ENCODE measurements at regions of chr5 and their contacts with region 1.

Region 1: DNA sequence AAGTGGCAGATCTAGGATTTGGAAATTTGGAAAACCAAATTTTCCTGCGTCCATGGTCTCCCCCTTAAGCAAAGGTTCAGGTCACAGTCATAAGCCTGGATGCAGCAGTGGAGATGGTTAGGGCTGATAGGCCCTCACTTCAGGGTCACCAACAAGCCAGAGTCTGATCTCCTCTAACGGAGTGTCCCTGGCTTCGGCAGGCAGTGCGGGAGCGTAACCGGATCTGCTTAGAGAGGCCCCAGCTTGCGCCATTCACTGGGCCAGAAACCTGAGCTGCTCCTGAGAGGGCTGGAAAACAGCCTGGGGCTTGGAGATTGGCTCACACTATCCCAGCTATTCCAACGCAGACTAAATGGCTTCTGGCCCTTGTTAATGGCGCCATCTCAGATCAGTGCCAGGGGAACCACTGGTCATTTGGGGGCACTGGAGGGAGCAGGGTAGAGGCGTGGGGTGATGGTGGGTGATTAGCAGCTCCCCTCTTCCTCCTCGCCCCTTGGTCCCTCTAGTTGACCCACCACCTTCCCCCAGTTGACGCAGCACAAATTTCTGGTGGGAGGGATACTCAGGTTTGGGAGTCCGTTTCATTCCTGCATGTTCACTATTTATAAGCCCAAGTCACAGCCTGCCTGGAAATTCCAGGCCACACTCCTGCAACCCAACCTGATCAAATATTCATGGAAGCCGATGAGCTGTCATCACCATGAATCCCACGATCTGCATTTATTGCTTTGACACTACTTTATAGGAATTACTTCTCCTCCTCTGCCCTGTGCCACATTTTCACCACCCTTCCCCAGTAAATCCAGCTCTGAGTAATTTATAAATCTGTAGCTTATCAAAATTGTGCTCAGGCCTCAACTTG is 134.6 kb upstream of the CPEB4 start:
- H3K4me3 ChIP-seq: no peak overlapping the region
- H3K27ac ChIP-seq: 0 out of 2 replicates have a peak overlapping the region, but pooled peaks have one; percentile 1
- H3K4me1 ChIP-seq: peaks cover 4% of the 10 kb centered on the region
- CTCF ChIP-seq: no peak

Region 2: GRCh38 chr5:173764321-173765029 is 10.9 kb after region 1 on chr5:
- CTCF ChIA-PET with region 1: no interaction called
- POLR2A ChIA-PET with region 1: interaction called, 10 read pairs
- H3K4me3 ChIP-seq: no peak overlapping the region
- H3K27ac ChIP-seq: no peak overlapping the region; the same call in 1 of the 2 replicates
- H3K4me1 ChIP-seq: peaks cover 7% of the 10 kb centered on the region; the same call in 1 of the 2 replicates
- CTCF ChIP-seq: no peak

Region 3: GRCh38 chr5:173789031-173789920 is 35.7 kb after region 1 on chr5:
- CTCF ChIA-PET with region 1: no interaction called
- POLR2A ChIA-PET with region 1: no interaction called
- H3K4me3 ChIP-seq: no peak overlapping the region
- H3K27ac ChIP-seq: no peak overlapping the region
- H3K4me1 ChIP-seq: no peaks in the 10 kb centered on the region
- CTCF ChIP-seq: no peak

Region 4: DNA sequence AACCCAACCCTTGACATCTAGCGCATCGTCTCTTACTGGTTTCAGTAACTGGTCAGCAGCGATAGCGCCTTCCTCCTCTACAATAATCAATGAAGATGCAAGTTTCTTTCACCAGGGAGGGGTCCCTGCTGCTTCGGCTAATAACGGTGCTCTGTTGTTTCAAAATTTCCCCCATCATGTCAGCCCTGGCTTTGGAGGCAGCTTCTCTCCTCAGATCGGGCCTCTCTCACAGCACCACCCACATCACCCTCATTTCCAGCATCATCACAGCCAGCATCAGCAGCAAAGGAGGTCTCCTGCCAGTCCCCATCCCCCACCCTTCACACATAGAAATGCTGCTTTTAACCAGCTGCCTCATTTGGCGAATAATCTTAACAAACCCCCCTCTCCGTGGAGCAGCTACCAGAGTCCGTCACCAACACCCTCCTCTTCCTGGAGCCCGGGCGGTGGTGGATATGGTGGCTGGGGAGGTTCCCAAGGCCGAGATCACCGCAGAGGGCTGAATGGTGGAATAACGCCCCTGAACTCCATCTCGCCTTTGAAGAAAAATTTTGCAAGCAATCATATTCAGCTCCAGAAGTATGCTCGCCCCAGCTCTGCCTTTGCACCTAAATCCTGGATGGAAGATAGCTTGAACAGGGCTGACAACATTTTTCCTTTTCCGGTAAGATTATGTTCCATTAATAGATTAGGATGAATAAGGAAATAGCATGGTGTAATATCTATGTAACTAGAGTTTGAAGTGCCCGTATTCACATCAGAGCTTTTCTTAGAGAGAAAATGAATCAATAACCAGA is 136.9 kb after region 1 on chr5:
- CTCF ChIA-PET with region 1: no interaction called
- POLR2A ChIA-PET with region 1: no interaction called
- H3K4me3 ChIP-seq: peak overlapping the region; percentile 48
- H3K27ac ChIP-seq: peak overlapping the region; percentile 52; the same call in 1 of the 2 replicates
- H3K4me1 ChIP-seq: peaks cover 14% of the 10 kb centered on the region
- CTCF ChIP-seq: no peak

Measured in HEK293 (cell line).